ENCODE measurements at regions of chr13 and their contacts with region 1.

Region 1: DNA sequence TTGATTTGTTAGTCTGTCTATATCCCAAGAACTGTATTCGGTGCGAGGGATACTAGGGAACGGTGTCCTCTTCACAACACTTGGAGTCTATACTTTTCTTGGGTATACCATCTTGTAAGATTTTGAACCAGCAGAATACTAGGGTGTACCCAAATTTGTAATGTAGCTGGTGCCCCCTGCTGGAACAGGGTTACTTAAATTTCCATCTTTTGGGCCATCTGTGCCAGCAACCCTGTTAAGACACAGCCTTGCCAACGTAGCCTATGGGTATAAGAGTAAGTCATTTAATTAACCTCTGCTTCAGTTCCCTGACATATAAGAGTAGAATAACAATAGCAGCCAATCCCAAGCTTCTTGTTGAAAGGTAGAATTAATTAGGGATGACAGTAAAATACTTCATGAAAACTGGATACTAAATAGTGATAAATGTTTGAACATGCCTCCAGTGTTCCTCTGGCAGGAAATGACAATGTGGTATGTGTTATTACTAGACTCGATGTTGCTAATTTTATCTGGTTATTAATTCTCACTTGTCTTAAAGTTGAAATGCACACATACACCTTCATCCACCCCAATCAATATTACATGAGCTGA is 607.6 kb downstream of the FGF9 start:
- DNase-seq: peak in 1 of 2 donors; percentile 73
- H3K4me3 ChIP-seq: no peak overlapping the region
- H3K27ac ChIP-seq: no peak overlapping the region
- H3K4me1 ChIP-seq: peaks cover 0 to 5% of the 10 kb centered on the region in 2 donors
- H3K27me3 ChIP-seq: no peaks in the 10 kb centered on the region
- CTCF ChIP-seq: peak; percentile 31 to 45 (median 32)

Region 2: DNA sequence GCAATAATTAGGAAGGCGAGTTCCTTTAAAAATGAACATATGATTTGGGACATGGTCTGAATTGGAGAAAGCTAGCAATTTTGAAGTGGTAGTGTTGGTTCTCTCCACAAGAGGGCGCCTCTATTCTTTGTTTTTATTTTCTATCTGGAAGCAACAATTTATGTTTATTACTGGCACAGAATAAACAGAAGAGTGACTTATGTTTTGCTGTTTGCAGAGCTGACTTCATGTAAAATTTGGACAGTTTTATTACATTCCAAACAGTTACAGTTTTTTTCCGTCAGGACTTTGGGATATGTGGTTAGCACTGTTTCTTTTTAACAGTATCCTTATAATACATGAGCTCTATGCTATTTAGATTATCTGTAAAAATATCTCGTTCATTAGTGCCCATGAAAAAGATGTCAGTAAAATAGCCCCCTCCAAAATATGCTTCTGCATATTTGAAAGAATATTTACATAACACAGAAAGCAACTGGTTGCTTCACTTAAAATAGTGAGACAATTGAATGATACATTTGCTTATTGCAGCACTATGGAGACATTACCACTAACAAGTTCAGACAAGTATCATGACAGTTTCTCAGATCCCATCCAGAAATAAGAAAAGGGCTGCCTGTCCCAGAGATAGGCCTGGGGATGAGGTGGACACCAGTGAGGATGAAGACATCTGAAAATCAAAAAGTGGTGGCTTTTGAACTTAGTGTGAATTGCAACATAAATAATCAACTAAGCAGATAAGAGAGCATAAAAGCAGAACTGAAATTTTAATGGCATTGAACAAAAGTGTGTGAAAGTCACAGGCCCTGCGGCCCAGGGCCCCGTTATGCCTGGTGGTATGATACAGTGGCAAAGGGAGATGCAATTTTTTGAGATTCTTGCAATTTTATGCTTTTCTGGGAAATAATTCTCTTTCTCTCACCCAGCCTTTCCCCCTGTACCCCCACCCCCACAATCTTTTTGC is 639.8 kb before region 1 on chr13:
- intact Hi-C with region 1: loop called (anchors 5 kb)
- DNase-seq: no peak
- H3K4me3 ChIP-seq: no peak overlapping the region
- H3K27ac ChIP-seq: no peak overlapping the region
- H3K4me1 ChIP-seq: no peaks in the 10 kb centered on the region
- H3K27me3 ChIP-seq: no peaks in the 10 kb centered on the region
- CTCF ChIP-seq: peak; percentile 58 to 76 (median 70)

Region 3: GRCh38 chr13:21849323-21849722 is 429.1 kb before region 1 on chr13:
- intact Hi-C with region 1: loop called (anchors 10 kb)
- DNase-seq: no peak
- H3K4me3 ChIP-seq: no peak overlapping the region
- H3K27ac ChIP-seq: no peak overlapping the region
- H3K4me1 ChIP-seq: peaks cover 0 to 5% of the 10 kb centered on the region in 2 donors
- H3K27me3 ChIP-seq: no peaks in the 10 kb centered on the region
- CTCF ChIP-seq: peak; percentile 16 to 59 (median 37)

Region 4: GRCh38 chr13:22103044-22104027 is 175.1 kb before region 1 on chr13:
- intact Hi-C with region 1: loop called (anchors 5 kb)
- DNase-seq: no peak
- H3K4me3 ChIP-seq: no peak overlapping the region
- H3K27ac ChIP-seq: no peak overlapping the region
- H3K4me1 ChIP-seq: peaks cover 7 to 13% of the 10 kb centered on the region in 2 donors
- H3K27me3 ChIP-seq: no peaks in the 10 kb centered on the region
- CTCF ChIP-seq: no peak